HEK293 (cell line): ENCODE measurements at regions of chr1 and their contacts with region 1.

Region 1: DNA sequence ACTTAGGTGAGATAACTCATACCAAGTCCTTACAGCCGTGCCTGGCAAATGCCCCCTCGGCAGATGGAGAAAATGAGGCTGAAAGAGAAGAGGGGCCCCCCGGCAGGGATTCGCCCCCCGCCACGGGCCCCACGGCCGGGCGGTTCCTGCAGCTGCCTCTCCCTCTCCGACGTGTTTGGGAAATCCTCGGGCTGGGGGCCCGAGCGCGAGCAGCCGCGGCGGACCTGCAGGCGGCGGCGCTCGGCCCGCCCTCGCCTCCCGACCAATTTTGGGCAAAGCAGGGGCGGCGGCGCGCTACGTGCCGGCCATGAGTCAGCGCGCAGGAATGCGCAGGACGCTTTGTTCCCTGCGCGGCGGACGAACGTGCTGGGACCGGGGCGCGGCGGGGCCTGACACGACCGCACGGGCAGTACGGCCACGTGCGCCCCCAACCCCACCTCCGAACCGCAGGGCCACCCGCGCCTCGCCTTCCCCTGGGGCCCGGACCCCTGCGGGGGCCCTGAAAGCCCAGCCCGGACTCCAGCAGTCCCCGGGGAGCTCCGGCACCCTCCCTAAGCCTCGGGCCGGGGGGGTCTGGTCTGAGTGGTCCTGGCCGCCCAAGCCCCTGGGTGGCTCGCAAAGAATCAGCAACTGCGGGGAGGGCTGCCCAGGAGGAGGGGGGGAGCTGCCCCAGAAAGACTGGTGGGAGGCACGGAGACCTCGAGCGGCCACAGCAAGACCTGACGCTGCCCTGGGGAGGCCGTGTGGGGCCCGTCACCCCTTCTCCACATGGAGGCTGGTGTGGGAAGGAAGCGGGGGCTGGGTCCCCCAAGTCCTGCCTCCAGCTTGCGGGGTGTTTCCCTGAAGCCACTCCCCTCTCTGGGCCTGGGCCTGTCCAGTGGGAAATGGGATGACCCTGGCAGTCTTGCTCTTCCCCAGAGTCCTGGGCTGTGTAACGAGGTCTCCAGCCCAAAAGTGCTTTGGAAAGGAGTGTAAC is 11.9 kb upstream of the EDN2 start:
- H3K4me3 ChIP-seq: peak overlapping the region; percentile 14
- H3K27ac ChIP-seq: peak overlapping the region; percentile 58
- H3K4me1 ChIP-seq: peaks cover 2% of the 10 kb centered on the region
- CTCF ChIP-seq: no peak; the same call in 1 of the 2 replicates

Region 2: GRCh38 chr1:41474490-41475271 is 21.7 kb before region 1 on chr1:
- CTCF ChIA-PET with region 1: interaction called, 33 read pairs
- POLR2A ChIA-PET with region 1: no interaction called
- H3K4me3 ChIP-seq: no peak overlapping the region
- H3K27ac ChIP-seq: no peak overlapping the region
- H3K4me1 ChIP-seq: no peaks in the 10 kb centered on the region
- CTCF ChIP-seq: no peak

Region 3: GRCh38 chr1:41484372-41485241 is 11.8 kb before region 1 on chr1 and contains the start of gene EDN2:
- CTCF ChIA-PET with region 1: interaction called, 34 read pairs
- POLR2A ChIA-PET with region 1: interaction called, 4 read pairs
- H3K4me3 ChIP-seq: no peak within 1 kb of the TSS
- H3K27ac ChIP-seq: no peak within 1 kb of the TSS
- H3K4me1 ChIP-seq: 0 out of 2 replicates have a peak, but pooled peaks cover 4% of the 10 kb centered on the region
- CTCF ChIP-seq: peak; percentile 59; the same call in 1 of the 2 replicates

Region 4: GRCh38 chr1:41547781-41548560 is 51.6 kb after region 1 on chr1:
- CTCF ChIA-PET with region 1: no interaction called
- POLR2A ChIA-PET with region 1: no interaction called
- H3K4me3 ChIP-seq: no peak overlapping the region
- H3K27ac ChIP-seq: no peak overlapping the region
- H3K4me1 ChIP-seq: no peaks in the 10 kb centered on the region
- CTCF ChIP-seq: no peak

Region 5: GRCh38 chr1:41562328-41562727 is 66.0 kb after region 1 on chr1:
- CTCF ChIA-PET with region 1: no interaction called
- POLR2A ChIA-PET with region 1: no interaction called
- H3K4me3 ChIP-seq: no peak overlapping the region
- H3K27ac ChIP-seq: no peak overlapping the region
- H3K4me1 ChIP-seq: no peaks in the 10 kb centered on the region
- CTCF ChIP-seq: no peak

Region 6: GRCh38 chr1:41573785-41574713 is 77.7 kb after region 1 on chr1:
- CTCF ChIA-PET with region 1: no interaction called
- POLR2A ChIA-PET with region 1: no interaction called
- H3K4me3 ChIP-seq: no peak overlapping the region
- H3K27ac ChIP-seq: no peak overlapping the region
- H3K4me1 ChIP-seq: no peaks in the 10 kb centered on the region
- CTCF ChIP-seq: peak; percentile 92

Region 7: DNA sequence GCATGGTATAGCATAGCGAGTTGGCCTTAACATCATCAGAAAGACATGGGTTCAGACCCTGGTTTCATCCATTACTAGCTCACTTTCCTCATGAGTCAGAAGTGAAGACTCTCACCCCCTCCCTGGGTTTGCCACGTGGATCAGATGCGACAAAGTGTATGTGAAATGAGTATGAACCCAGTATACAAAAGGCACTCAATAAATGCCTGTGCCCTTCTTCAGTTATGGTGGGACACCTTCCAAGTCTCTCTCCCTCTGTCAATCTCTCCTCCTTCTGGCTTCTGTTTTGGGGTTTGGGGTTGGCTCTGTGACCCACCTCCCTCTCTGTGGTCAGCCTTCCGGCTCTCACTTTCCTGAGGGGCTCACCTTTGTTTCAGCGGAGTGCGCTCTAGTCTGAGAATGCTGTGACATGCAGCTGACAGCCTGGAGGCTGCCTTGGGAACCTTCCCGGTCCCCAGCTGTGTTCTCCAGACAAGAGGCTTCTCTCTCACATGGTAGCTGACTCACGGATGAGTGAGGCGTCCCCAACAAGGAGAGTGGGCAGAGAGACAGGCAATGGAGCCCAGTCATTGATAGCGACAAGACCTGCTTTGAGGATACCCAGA is 143.1 kb after region 1 on chr1:
- CTCF ChIA-PET with region 1: no interaction called
- POLR2A ChIA-PET with region 1: no interaction called
- H3K4me3 ChIP-seq: no peak overlapping the region
- H3K27ac ChIP-seq: no peak overlapping the region
- H3K4me1 ChIP-seq: no peaks in the 10 kb centered on the region
- CTCF ChIP-seq: no peak